ENCODE measurements at regions of chr4 and their contacts with region 1.

Region 1: GRCh38 chr4:15882675-15883086 is 55.9 kb downstream of the FGFBP1 start:
- DNase-seq: peak; percentile 82
- ATAC-seq: peak; percentile 92
- H3K4me3 ChIP-seq: no peak overlapping the region
- H3K27ac ChIP-seq: peak overlapping the region; percentile 46
- H3K4me1 ChIP-seq: peaks cover 13% of the 10 kb centered on the region; the same call in 1 of the 2 replicates
- H3K27me3 ChIP-seq: no peaks in the 10 kb centered on the region
- CTCF ChIP-seq: peak; percentile 88

Region 2: GRCh38 chr4:15805583-15806517 is 76.8 kb before region 1 on chr4:
- CTCF ChIA-PET with region 1: interaction called, 4 read pairs
- POLR2A ChIA-PET with region 1: no interaction called
- intact Hi-C with region 1: loop called (anchors 1 kb)
- DNase-seq: peak; percentile 79
- ATAC-seq: peak; percentile 85
- H3K4me3 ChIP-seq: peak overlapping the region; percentile 53; the same call in 1 of the 2 replicates
- H3K27ac ChIP-seq: no peak overlapping the region
- H3K4me1 ChIP-seq: 0 out of 2 replicates have a peak, but pooled peaks cover 4% of the 10 kb centered on the region
- H3K27me3 ChIP-seq: no peaks in the 10 kb centered on the region
- CTCF ChIP-seq: peak; percentile 76

Region 3: DNA sequence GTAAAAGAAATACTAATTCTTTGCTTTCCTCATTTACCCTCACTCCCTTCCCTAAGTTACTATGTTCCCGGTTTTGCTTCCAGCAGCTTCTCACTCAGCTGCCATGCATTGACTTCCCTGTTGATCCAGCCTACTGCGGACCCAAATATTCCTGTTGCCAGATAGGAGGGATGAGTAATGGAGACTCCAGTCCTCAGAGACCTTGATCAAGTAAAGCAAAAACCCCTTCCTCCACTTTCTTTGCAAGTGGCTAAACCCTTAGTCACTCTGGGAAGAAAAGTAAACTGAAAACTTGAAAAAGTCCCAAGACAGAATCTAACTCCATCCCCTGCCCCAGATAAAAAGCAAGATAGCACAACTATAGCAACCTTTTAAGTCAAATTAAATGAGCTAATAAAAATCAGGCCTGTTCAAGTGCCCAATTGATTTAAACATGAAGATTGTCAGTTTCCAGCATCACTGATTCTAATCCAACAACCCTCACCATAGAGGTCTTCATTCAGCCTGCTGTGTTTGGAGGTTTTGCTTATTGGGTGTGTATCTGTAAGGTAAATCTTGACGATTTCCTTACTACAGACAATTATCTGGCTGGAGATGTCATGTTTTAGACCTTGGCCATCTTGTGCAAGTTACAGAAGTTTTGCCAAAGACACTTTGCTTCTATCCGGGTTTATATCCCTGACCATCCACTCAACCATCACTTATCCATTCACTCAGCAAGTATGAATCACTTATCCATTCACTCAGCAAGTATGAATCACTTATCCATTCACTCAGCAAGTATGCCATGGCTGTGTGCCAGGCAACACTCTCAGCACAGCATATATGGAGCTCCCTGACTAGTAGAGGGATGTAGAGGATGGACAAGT is 38.3 kb after region 1 on chr4:
- CTCF ChIA-PET with region 1: interaction called, 6 read pairs
- POLR2A ChIA-PET with region 1: no interaction called
- intact Hi-C with region 1: loop called (anchors 2 kb)
- DNase-seq: peak; percentile 93
- ATAC-seq: peak; percentile 92
- H3K4me3 ChIP-seq: peak overlapping the region; percentile 39; the same call in 1 of the 2 replicates
- H3K27ac ChIP-seq: peak overlapping the region; percentile 99
- H3K4me1 ChIP-seq: peaks cover 50% of the 10 kb centered on the region
- H3K27me3 ChIP-seq: no peaks in the 10 kb centered on the region
- CTCF ChIP-seq: no peak

Region 4: GRCh38 chr4:15956179-15956850 is 73.6 kb after region 1 on chr4:
- CTCF ChIA-PET with region 1: interaction called, 69 read pairs
- POLR2A ChIA-PET with region 1: interaction called, 3 read pairs
- intact Hi-C with region 1: loop called (anchors 1 kb)
- DNase-seq: peak; percentile 86
- ATAC-seq: peak; percentile 84
- H3K4me3 ChIP-seq: no peak overlapping the region
- H3K27ac ChIP-seq: peak overlapping the region; percentile 67
- H3K4me1 ChIP-seq: peaks cover 6% of the 10 kb centered on the region
- H3K27me3 ChIP-seq: no peaks in the 10 kb centered on the region
- CTCF ChIP-seq: peak; percentile 83